HEK293 (cell line): ENCODE measurements at regions of chr5 and their contacts with region 1.

Region 1: GRCh38 chr5:132215329-132215728 is 12.3 kb downstream of the P4HA2 start:
- H3K4me3 ChIP-seq: no peak overlapping the region
- H3K27ac ChIP-seq: no peak overlapping the region
- H3K4me1 ChIP-seq: 0 out of 2 replicates have a peak, but pooled peaks cover 2% of the 10 kb centered on the region
- CTCF ChIP-seq: no peak

Region 2: GRCh38 chr5:132227485-132228240 is 12.3 kb after region 1 on chr5 and contains the start of gene P4HA2:
- CTCF ChIA-PET with region 1: interaction called, 8 read pairs
- POLR2A ChIA-PET with region 1: interaction called, 28 read pairs
- H3K4me3 ChIP-seq: peak within 1 kb of the TSS; percentile 58
- H3K27ac ChIP-seq: peak within 1 kb of the TSS; percentile 57; the same call in 1 of the 2 replicates
- H3K4me1 ChIP-seq: peaks cover 4% of the 10 kb centered on the region
- CTCF ChIP-seq: no peak; the same call in none of the 2 replicates

Region 3: GRCh38 chr5:132447143-132447542 is 231.8 kb after region 1 on chr5:
- CTCF ChIA-PET with region 1: no interaction called
- POLR2A ChIA-PET with region 1: interaction called, 12 read pairs
- H3K4me3 ChIP-seq: no peak overlapping the region
- H3K27ac ChIP-seq: no peak overlapping the region
- H3K4me1 ChIP-seq: no peaks in the 10 kb centered on the region
- CTCF ChIP-seq: no peak

Region 4: GRCh38 chr5:133140311-133140710 is 925.0 kb after region 1 on chr5:
- CTCF ChIA-PET with region 1: no interaction called
- POLR2A ChIA-PET with region 1: no interaction called
- H3K4me3 ChIP-seq: no peak overlapping the region
- H3K27ac ChIP-seq: no peak overlapping the region
- H3K4me1 ChIP-seq: no peaks in the 10 kb centered on the region
- CTCF ChIP-seq: no peak